ENCODE measurements at regions of chr15 and their contacts with region 1.

Region 1: GRCh38 chr15:47541562-47541961 is 175.7 kb upstream of the SEMA6D start:
- DNase-seq: no peak
- H3K4me3 ChIP-seq: no peak overlapping the region
- H3K27ac ChIP-seq: no peak overlapping the region
- H3K4me1 ChIP-seq: no peaks in the 10 kb centered on the region
- CTCF ChIP-seq: no peak

Region 2: DNA sequence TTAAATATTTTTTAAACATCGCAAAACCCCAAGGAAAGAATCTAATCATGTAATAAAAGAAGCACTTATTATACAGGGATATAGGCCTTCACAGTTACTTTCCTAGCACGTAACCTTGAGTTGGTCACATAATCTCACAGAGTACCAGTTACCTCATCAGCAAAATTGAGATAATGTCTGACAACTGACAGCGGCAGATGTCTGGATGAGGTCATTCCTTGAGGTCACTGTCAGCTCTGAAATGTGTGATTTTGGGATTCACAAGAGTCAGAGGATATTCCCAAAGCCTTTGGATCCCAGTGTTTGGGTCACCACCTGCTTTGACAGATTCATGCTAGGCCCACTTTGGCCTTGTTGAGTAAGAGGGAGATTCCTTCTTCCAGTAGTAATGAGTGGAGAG is 24.4 kb after region 1 on chr15:
- CTCF ChIA-PET with region 1: no interaction called
- POLR2A ChIA-PET with region 1: interaction called, 3 read pairs
- intact Hi-C with region 1: loop called (anchors 1 kb)
- DNase-seq: no peak
- H3K4me3 ChIP-seq: no peak overlapping the region
- H3K27ac ChIP-seq: no peak overlapping the region
- H3K4me1 ChIP-seq: no peaks in the 10 kb centered on the region
- CTCF ChIP-seq: no peak